Psoas muscle (tissue), 8 donors: ENCODE measurements at regions of chr10 and their contacts with region 1.

Region 1: GRCh38 chr10:73088304-73088703 is 8.4 kb downstream of the P4HA1 start:
- DNase-seq: no peak
- ATAC-seq: no peak
- H3K4me3 ChIP-seq: no peak overlapping the region
- H3K27ac ChIP-seq: peak overlapping the region; percentile 54
- H3K4me1 ChIP-seq: peaks cover 44% of the 10 kb centered on the region
- H3K27me3 ChIP-seq: no peaks in the 10 kb centered on the region
- CTCF ChIP-seq: no peak

Region 2: GRCh38 chr10:73119952-73120351 is 31.6 kb after region 1 on chr10:
- intact Hi-C with region 1: loop called (anchors 5 kb)
- DNase-seq: no peak
- ATAC-seq: no peak
- H3K4me3 ChIP-seq: no peak overlapping the region
- H3K27ac ChIP-seq: peak overlapping the region; percentile 31
- H3K4me1 ChIP-seq: peaks cover 17% of the 10 kb centered on the region
- H3K27me3 ChIP-seq: no peaks in the 10 kb centered on the region
- CTCF ChIP-seq: no peak

Region 3: DNA sequence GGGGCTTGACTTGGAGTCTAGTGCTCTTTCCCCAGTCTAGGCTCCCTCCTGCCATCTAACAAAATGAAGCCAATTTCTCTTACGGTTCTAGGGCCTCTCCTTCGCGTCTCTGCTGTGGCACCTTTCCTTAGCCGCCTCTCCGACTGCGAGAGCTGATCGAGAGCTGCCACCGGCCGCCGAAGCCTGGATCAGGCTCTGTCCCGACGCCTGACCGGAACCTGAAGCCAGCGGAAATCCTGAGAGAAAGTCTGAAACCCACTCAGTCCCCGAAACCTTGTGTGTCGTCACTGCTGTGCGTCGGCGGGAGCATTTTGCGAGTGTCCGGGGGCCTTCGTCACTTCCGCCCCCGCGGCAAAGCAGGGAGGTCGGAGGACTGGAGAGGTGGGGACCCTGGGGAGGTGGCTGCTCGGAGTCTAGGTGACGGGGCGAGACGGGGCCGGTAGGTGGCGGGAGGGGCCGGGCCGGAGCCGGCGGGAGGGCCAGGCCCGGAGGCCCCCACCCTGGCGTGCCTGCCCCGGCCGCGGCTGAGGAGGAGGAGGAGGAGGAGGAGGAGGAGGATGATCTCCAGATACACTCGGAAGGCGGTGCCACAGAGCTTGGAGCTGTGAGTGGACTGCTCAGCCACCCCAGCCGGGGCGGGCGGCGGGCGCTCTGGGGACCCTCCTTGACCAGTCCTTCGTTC is 79.6 kb after region 1 on chr10 and contains the starts of genes ECD and FAM149B1:
- intact Hi-C with region 1: no loop called
- DNase-seq: peak; percentile 95 to 97
- ATAC-seq: peak; percentile 98 to 99 (median 98)
- H3K4me3 ChIP-seq: peak within 1 kb of the TSS; percentile 98
- H3K27ac ChIP-seq: peak within 1 kb of the TSS; percentile 99
- H3K4me1 ChIP-seq: peaks cover 33% of the 10 kb centered on the region
- H3K27me3 ChIP-seq: no peaks in the 10 kb centered on the region
- CTCF ChIP-seq: peak; percentile 14
- total RNA-seq, gene ECD: 12.2 to 17.1 (median 15.0) TPM
- total RNA-seq, gene FAM149B1: 8.9 to 18.1 (median 11.8) TPM